ENCODE measurements at regions of chr12 and their contacts with region 1.

Region 1: DNA sequence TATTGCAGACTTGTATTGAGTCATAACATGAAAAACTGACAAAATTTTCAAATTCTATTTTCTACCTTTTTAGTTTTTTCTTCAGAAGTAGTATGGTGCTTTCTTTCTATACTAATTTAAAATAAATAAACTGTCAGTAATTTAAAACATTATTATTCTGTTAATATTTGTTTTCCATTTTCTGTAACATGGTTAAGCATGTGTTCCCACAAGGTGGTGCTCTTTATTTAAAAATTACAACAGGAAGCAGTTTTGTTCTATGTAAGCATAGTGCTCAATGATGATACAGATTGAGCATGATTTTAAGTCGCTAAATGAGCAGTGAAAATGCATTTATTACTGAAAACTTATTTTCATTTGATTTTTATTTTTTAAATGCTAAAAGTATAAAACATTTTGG is 114.6 kb downstream of the PPFIA2 start:
- DNase-seq: peak in 1 of 2 donors; percentile 65
- ATAC-seq: peak; percentile 70 to 76 (median 73)
- H3K4me3 ChIP-seq: no peak overlapping the region
- H3K4me3 Mint-ChIP-seq: no peak overlapping the region
- H3K27ac ChIP-seq: no peak overlapping the region
- H3K27ac Mint-ChIP-seq: no peak overlapping the region
- H3K4me1 ChIP-seq: no peaks in the 10 kb centered on the region
- H3K4me1 Mint-ChIP-seq: no peaks in the 10 kb centered on the region
- H3K27me3 ChIP-seq: no peaks in the 10 kb centered on the region
- H3K27me3 Mint-ChIP-seq: peaks cover 0 to 3% of the 10 kb centered on the region in 2 donors
- CTCF ChIP-seq: peak; percentile 75

Region 2: DNA sequence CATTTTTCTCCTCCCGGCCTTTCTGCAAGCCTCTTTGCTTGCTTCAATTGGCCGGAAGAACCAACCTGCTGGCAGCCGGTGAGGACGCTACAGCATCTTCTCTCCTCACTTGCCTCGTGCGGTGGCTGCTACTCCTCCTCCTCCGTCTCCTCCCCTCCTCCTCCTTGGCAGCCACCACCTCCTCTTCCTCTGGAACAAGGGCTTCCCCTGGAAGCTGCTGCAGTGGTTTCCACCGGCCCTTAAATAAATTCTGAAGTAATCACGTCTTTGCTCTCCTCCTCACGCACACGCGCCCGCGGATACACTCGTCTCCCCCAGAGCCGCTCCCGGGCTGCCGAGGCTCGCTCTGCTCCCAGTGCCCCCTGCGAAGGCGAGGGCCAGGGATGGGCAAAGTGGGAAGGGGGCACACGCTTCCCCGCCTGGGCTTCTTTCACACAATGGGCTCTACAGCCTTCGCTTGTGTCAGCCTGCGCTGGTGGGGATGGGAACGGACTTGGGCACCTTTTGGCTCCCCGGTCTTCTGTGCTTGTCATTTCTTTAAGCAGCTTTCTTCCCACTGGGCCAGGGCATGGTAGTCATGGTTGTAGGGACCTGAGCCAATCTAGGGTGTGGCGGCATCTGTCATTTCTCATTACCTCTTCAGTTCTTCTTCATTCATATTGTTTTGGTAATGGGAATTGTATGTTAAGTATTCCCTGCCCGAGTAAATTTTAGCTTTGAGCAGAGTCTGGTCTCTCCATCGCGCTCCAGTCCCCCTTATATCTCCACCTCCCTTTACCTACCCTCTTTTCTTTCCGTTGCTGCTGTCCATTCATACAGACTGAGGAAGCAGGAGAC is 114.9 kb after region 1 on chr12 and contains the start of gene PPFIA2:
- intact Hi-C with region 1: no loop called
- DNase-seq: peak in 1 of 2 donors; percentile 42
- ATAC-seq: peak in 1 of 3 donors; percentile 56
- H3K4me3 ChIP-seq: no peak within 1 kb of the TSS
- H3K4me3 Mint-ChIP-seq: peak within 1 kb of the TSS; percentile 61
- H3K27ac ChIP-seq: no peak within 1 kb of the TSS
- H3K27ac Mint-ChIP-seq: no peak within 1 kb of the TSS
- H3K4me1 ChIP-seq: peaks cover 20% of the 10 kb centered on the region
- H3K4me1 Mint-ChIP-seq: peaks cover 10 to 18% of the 10 kb centered on the region in 2 donors
- H3K27me3 ChIP-seq: peaks cover 25% of the 10 kb centered on the region
- H3K27me3 Mint-ChIP-seq: peaks cover 23 to 52% of the 10 kb centered on the region in 2 donors
- CTCF ChIP-seq: no peak
- total RNA-seq, gene PPFIA2: not detected

Region 3: GRCh38 chr12:81992461-81992860 is 348.0 kb after region 1 on chr12:
- intact Hi-C with region 1: loop called (anchors 1 kb)
- DNase-seq: peak in 1 of 2 donors; percentile 69
- ATAC-seq: peak; percentile 79 to 92 (median 85)
- H3K4me3 ChIP-seq: no peak overlapping the region
- H3K4me3 Mint-ChIP-seq: no peak overlapping the region
- H3K27ac ChIP-seq: no peak overlapping the region
- H3K27ac Mint-ChIP-seq: no peak overlapping the region
- H3K4me1 ChIP-seq: no peaks in the 10 kb centered on the region
- H3K4me1 Mint-ChIP-seq: peaks cover 0 to 6% of the 10 kb centered on the region in 2 donors
- H3K27me3 ChIP-seq: no peaks in the 10 kb centered on the region
- H3K27me3 Mint-ChIP-seq: no peaks in the 10 kb centered on the region
- CTCF ChIP-seq: peak; percentile 60

Region 4: DNA sequence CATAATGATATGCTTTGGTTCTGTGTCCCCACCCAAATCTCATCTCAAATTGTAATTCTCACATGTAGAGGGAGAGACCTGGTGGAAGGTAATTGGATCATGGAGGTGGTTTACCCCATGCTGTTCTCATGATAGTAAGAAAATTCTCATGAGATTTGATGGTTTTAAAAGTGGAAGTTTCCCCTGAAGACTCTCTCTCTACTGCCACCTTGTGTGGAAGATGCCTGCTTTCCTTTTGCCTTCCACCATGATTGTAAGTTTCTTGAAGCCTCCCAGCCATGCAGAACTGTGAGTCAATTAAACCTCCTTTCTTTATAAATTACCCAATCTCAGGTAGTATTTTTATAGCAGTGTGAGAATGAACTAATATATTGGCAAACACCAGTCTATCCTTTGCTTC is 375.0 kb after region 1 on chr12:
- intact Hi-C with region 1: loop called (anchors 1 kb)
- DNase-seq: peak in 1 of 2 donors; percentile 31
- ATAC-seq: no peak
- H3K4me3 ChIP-seq: no peak overlapping the region
- H3K4me3 Mint-ChIP-seq: no peak overlapping the region
- H3K27ac ChIP-seq: no peak overlapping the region
- H3K27ac Mint-ChIP-seq: no peak overlapping the region
- H3K4me1 ChIP-seq: no peaks in the 10 kb centered on the region
- H3K4me1 Mint-ChIP-seq: peaks cover 5 to 7% of the 10 kb centered on the region in 2 donors
- H3K27me3 ChIP-seq: no peaks in the 10 kb centered on the region
- H3K27me3 Mint-ChIP-seq: peaks cover 0 to 8% of the 10 kb centered on the region in 2 donors
- CTCF ChIP-seq: no peak

Region 5: DNA sequence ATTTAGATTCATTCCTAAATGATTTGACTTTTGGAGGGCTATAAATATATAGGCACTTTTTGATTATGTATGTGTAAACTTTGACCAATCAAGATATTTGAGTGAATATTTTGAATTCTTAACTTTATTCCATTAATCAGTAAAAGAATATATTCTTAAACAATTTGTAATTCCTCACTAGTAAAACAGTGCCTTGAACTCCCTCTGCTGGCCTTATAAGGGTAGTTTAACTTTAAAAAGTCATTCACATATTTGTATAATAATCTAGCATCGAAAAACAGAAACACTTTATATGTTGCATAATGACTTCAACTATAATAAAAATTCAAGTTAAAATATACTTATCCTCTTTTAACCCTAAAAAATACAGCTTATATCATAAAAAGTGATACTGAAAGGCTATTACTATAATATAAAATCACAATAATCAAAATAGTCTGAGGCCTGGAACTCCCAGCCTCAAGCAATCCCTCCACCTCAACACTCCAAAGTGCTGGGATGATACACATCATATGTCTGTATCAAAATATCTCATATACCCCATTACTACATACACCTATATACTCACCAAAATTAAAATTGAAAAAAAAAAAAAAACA is 682.5 kb after region 1 on chr12:
- intact Hi-C with region 1: loop called (anchors 2 kb)
- DNase-seq: peak in 1 of 2 donors; percentile 37
- ATAC-seq: no peak
- H3K4me3 ChIP-seq: no peak overlapping the region
- H3K4me3 Mint-ChIP-seq: no peak overlapping the region
- H3K27ac ChIP-seq: no peak overlapping the region
- H3K27ac Mint-ChIP-seq: no peak overlapping the region
- H3K4me1 ChIP-seq: no peaks in the 10 kb centered on the region
- H3K4me1 Mint-ChIP-seq: no peaks in the 10 kb centered on the region
- H3K27me3 ChIP-seq: no peaks in the 10 kb centered on the region
- H3K27me3 Mint-ChIP-seq: peaks cover 0 to 10% of the 10 kb centered on the region in 2 donors
- CTCF ChIP-seq: peak; percentile 48

Region 6: GRCh38 chr12:82358200-82359114 is 714.0 kb after region 1 on chr12 and contains the starts of genes CCDC59 and METTL25:
- intact Hi-C with region 1: loop called (anchors 1 kb)
- DNase-seq: peak; percentile 94 to 99
- ATAC-seq: peak; percentile 88 to 97 (median 89)
- H3K4me3 ChIP-seq: peak within 1 kb of the TSS; percentile 95
- H3K4me3 Mint-ChIP-seq: peak within 1 kb of the TSS; percentile 96
- H3K27ac ChIP-seq: peak within 1 kb of the TSS; percentile 96
- H3K27ac Mint-ChIP-seq: peak within 1 kb of the TSS; percentile 100
- H3K4me1 ChIP-seq: peaks cover 6% of the 10 kb centered on the region
- H3K4me1 Mint-ChIP-seq: peaks cover 53 to 58% of the 10 kb centered on the region in 2 donors
- H3K27me3 ChIP-seq: no peaks in the 10 kb centered on the region
- H3K27me3 Mint-ChIP-seq: no peaks in the 10 kb centered on the region
- CTCF ChIP-seq: peak; percentile 99
- total RNA-seq, gene CCDC59: 104 to 124 (median 105) TPM
- total RNA-seq, gene METTL25: 15.4 to 21.2 (median 17.8) TPM

Measured in natural killer cell (primary cell).